ENCODE measurements at regions of chr17 and their contacts with region 1.

Region 1: DNA sequence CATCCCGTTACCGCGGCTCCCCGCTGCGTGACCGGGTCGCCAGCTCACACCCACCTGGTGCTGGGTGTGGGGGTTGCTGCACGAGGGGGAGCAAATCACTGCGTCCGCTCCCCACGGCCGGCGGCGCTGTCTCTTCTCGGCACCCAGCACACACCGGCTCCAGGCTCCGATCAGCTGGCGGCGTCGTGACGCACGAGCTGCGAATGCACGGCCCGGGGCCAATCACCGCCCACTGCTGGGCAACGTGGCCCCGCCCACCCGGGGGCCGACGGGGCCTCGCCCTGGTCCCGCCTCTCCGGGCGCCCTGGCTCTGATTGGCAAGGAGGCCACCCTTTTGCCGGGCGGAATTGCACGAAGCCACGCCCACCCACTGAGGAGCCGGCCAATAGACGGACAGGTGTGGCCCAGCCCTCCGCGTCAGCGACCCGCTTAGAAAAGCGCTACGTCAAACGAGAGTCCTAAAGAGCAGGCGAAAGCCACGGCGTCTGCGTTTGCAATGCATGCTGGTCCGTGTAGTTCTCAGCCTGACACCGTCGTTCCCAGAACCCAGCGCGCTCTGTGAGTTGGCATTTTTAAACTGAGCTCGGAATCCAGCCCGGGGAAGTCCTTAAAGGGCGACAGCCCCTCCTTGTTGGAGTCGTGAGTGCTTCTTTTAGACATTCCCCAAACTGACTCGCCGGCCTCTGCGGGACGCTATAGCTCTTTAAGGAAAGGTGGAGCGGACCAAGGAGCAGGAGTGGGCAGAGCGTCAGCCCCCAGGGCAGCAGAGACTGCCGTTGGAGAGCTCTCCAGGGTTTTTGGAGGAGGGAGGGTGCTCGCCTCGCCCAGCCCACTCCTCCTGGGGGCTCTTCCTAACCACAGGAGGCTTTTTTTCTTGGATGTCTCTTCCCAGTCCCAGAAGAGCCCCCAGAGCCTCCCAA is 6.2 kb upstream of the TLCD2 start:
- DNase-seq: peak; percentile 99 to 100 (median 100)
- ATAC-seq: peak; percentile 89
- H3K4me3 ChIP-seq: peak overlapping the region; percentile 94
- H3K4me3 Mint-ChIP-seq: peak overlapping the region; percentile 95
- H3K27ac ChIP-seq: peak overlapping the region; percentile 84 to 96
- H3K27ac Mint-ChIP-seq: peak overlapping the region; percentile 89
- H3K4me1 ChIP-seq: peaks cover 52% of the 10 kb centered on the region
- H3K4me1 Mint-ChIP-seq: peaks cover 35% of the 10 kb centered on the region
- H3K27me3 ChIP-seq: peaks cover 4 to 13% of the 10 kb centered on the region in 2 experiments
- H3K27me3 Mint-ChIP-seq: peaks cover 9% of the 10 kb centered on the region
- CTCF ChIP-seq: no peak

Region 2: GRCh38 chr17:1628856-1629646 is 87.3 kb before region 1 on chr17:
- CTCF ChIA-PET with region 1: no interaction called
- POLR2A ChIA-PET with region 1: interaction called, 12 read pairs
- intact Hi-C with region 1: no loop called
- DNase-seq: peak; percentile 76 to 94 (median 87)
- ATAC-seq: peak; percentile 75
- H3K4me3 ChIP-seq: peak overlapping the region; percentile 76
- H3K4me3 Mint-ChIP-seq: peak overlapping the region; percentile 96
- H3K27ac ChIP-seq: peak overlapping the region in 1 of 2 donors; percentile 46
- H3K27ac Mint-ChIP-seq: peak overlapping the region; percentile 77
- H3K4me1 ChIP-seq: peaks cover 34% of the 10 kb centered on the region
- H3K4me1 Mint-ChIP-seq: peaks cover 23% of the 10 kb centered on the region
- H3K27me3 ChIP-seq: peaks cover 0 to 5% of the 10 kb centered on the region in 2 experiments
- H3K27me3 Mint-ChIP-seq: no peaks in the 10 kb centered on the region
- CTCF ChIP-seq: no peak

Region 3: GRCh38 chr17:1673041-1673785 is 43.1 kb before region 1 on chr17:
- CTCF ChIA-PET with region 1: interaction called, 13 read pairs
- POLR2A ChIA-PET with region 1: interaction called, 5 read pairs
- intact Hi-C with region 1: no loop called
- DNase-seq: peak in 6 of 14 experiments; percentile 21 to 63 (median 40)
- ATAC-seq: peak; percentile 46
- H3K4me3 ChIP-seq: no peak overlapping the region
- H3K4me3 Mint-ChIP-seq: no peak overlapping the region
- H3K27ac ChIP-seq: no peak overlapping the region
- H3K27ac Mint-ChIP-seq: peak overlapping the region; percentile 38
- H3K4me1 ChIP-seq: peaks cover 14% of the 10 kb centered on the region
- H3K4me1 Mint-ChIP-seq: peaks cover 38% of the 10 kb centered on the region
- H3K27me3 ChIP-seq: no peaks in the 10 kb centered on the region
- H3K27me3 Mint-ChIP-seq: no peaks in the 10 kb centered on the region
- CTCF ChIP-seq: no peak

Region 4: GRCh38 chr17:1764284-1764683 is 47.9 kb after region 1 on chr17:
- CTCF ChIA-PET with region 1: interaction called, 4 read pairs
- POLR2A ChIA-PET with region 1: interaction called, 35 read pairs
- intact Hi-C with region 1: loop called in 1 of 2 experiments (anchors 5 kb)
- DNase-seq: peak; percentile 49 to 90 (median 68)
- ATAC-seq: peak; percentile 95
- H3K4me3 ChIP-seq: peak overlapping the region; percentile 7
- H3K4me3 Mint-ChIP-seq: peak overlapping the region; percentile 21
- H3K27ac ChIP-seq: peak overlapping the region; percentile 54 to 80
- H3K27ac Mint-ChIP-seq: peak overlapping the region; percentile 83
- H3K4me1 ChIP-seq: peaks cover 59% of the 10 kb centered on the region
- H3K4me1 Mint-ChIP-seq: peaks cover 49% of the 10 kb centered on the region
- H3K27me3 ChIP-seq: no peaks in the 10 kb centered on the region
- H3K27me3 Mint-ChIP-seq: no peaks in the 10 kb centered on the region
- CTCF ChIP-seq: no peak

Region 5: DNA sequence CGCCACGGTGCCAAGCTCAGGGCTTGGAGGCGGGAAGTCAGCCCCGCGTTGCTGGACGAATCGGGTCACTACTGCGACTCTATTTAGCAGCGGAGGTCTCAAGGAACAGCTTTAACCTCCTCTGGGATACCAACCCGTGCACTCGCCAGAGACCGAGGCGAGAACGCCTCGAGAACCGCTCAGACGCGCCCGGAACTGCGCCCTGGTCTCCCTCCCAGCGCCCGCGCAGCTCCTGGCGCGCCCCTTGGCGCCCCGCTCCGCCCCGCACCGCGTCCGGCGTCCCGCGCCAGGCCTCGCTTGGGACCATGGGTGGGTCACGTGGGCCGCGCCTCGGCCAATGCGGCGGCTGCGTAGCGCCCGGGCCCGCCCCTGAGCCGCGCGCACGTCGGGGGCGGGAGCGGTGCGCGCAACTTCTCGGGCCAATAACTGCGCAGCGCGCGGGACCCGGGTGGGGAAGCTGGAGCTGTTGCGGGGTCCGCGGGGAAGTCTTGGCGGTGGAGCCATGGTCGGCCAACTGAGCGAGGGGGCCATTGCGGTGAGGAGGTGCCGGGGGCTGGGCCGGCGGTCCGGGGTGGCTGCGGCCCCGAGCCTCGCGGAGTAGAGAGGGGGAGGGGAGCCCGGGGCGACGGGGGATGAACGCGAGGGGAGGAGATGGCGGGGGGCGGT is 113.4 kb after region 1 on chr17 and contains the starts of genes RPA1 and SMYD4:
- CTCF ChIA-PET with region 1: interaction called, 3 read pairs
- POLR2A ChIA-PET with region 1: interaction called, 21 read pairs
- intact Hi-C with region 1: loop called (anchors 1 to 2 kb)
- DNase-seq: peak; percentile 71 to 95 (median 84)
- ATAC-seq: peak; percentile 98
- H3K4me3 ChIP-seq: peak within 1 kb of the TSS; percentile 87
- H3K4me3 Mint-ChIP-seq: peak within 1 kb of the TSS; percentile 99
- H3K27ac ChIP-seq: peak within 1 kb of the TSS; percentile 61 to 81
- H3K27ac Mint-ChIP-seq: peak within 1 kb of the TSS; percentile 90
- H3K4me1 ChIP-seq: peaks cover 51% of the 10 kb centered on the region
- H3K4me1 Mint-ChIP-seq: peaks cover 66% of the 10 kb centered on the region
- H3K27me3 ChIP-seq: no peaks in the 10 kb centered on the region
- H3K27me3 Mint-ChIP-seq: no peaks in the 10 kb centered on the region
- CTCF ChIP-seq: no peak
- total RNA-seq, gene RPA1: 38.6 to 38.7 TPM
- total RNA-seq, gene SMYD4: 9.3 to 10.6 TPM

Region 6: GRCh38 chr17:1870592-1870991 is 154.3 kb after region 1 on chr17:
- CTCF ChIA-PET with region 1: interaction called, 13 read pairs
- POLR2A ChIA-PET with region 1: interaction called, 11 read pairs
- intact Hi-C with region 1: loop called (anchors 1 to 2 kb)
- DNase-seq: peak in 3 of 14 experiments; percentile 82 to 84 (median 83)
- ATAC-seq: peak; percentile 65
- H3K4me3 ChIP-seq: no peak overlapping the region
- H3K4me3 Mint-ChIP-seq: peak overlapping the region; percentile 32
- H3K27ac ChIP-seq: peak overlapping the region; percentile 58 to 70
- H3K27ac Mint-ChIP-seq: peak overlapping the region; percentile 84
- H3K4me1 ChIP-seq: peaks cover 48% of the 10 kb centered on the region
- H3K4me1 Mint-ChIP-seq: peaks cover 50% of the 10 kb centered on the region
- H3K27me3 ChIP-seq: no peaks in the 10 kb centered on the region
- H3K27me3 Mint-ChIP-seq: no peaks in the 10 kb centered on the region
- CTCF ChIP-seq: no peak

Region 7: GRCh38 chr17:1908699-1909309 is 192.5 kb after region 1 on chr17:
- CTCF ChIA-PET with region 1: no interaction called
- POLR2A ChIA-PET with region 1: no interaction called
- intact Hi-C with region 1: no loop called
- DNase-seq: peak in 11 of 14 experiments; percentile 4 to 55 (median 23)
- ATAC-seq: peak; percentile 54
- H3K4me3 ChIP-seq: peak overlapping the region; percentile 34
- H3K4me3 Mint-ChIP-seq: peak overlapping the region; percentile 68
- H3K27ac ChIP-seq: no peak overlapping the region
- H3K27ac Mint-ChIP-seq: no peak overlapping the region
- H3K4me1 ChIP-seq: peaks cover 13% of the 10 kb centered on the region
- H3K4me1 Mint-ChIP-seq: peaks cover 15% of the 10 kb centered on the region
- H3K27me3 ChIP-seq: peaks cover 51 to 56% of the 10 kb centered on the region in 2 experiments
- H3K27me3 Mint-ChIP-seq: peaks cover 76% of the 10 kb centered on the region
- CTCF ChIP-seq: peak; percentile 41

Region 8: DNA sequence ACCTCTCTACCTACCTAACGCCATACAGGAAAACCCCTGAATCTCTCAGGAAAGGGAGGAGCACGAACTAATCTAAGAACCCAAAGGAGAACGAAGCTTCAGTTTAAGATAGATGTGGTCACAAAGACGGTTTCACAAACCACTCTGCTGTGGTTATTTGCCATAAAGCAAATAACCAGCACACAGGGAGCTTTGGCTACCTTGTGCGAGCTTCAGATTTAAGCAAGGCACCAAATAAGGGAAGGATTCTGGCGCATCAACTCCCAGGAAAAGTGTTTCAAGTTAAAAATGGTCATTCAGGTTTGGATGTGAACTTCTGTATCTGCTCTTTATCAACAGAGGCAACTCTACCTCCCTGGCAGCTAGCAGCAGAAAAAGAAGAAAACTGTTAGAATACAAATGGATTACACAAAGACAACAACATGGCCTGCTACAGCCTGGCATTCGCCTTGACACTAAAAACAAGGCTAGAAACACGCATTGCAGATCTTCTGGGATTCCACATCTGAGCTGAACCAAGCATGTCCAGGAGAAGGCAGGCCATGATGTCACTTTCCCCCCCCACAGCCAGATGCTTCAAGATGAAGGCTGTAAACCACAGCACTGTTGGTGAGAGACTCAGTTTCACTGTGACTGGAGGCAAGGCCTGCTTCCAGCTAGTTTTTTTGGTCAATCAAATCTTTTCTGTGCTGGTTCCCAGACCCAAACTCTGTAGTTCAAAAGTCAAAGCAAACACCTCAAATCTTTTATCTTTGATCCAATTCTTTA is 543.6 kb after region 1 on chr17:
- CTCF ChIA-PET with region 1: no interaction called
- POLR2A ChIA-PET with region 1: no interaction called
- intact Hi-C with region 1: loop called in 1 of 2 experiments (anchors 5 kb)
- DNase-seq: peak; percentile 17 to 84 (median 46)
- ATAC-seq: peak; percentile 55
- H3K4me3 ChIP-seq: peak overlapping the region; percentile 12
- H3K4me3 Mint-ChIP-seq: peak overlapping the region; percentile 85
- H3K27ac ChIP-seq: peak overlapping the region; percentile 63 to 76
- H3K27ac Mint-ChIP-seq: peak overlapping the region; percentile 98
- H3K4me1 ChIP-seq: peaks cover 68% of the 10 kb centered on the region
- H3K4me1 Mint-ChIP-seq: peaks cover 75% of the 10 kb centered on the region
- H3K27me3 ChIP-seq: no peaks in the 10 kb centered on the region
- H3K27me3 Mint-ChIP-seq: no peaks in the 10 kb centered on the region
- CTCF ChIP-seq: no peak